Heart left ventricle (tissue), 16 donors: ENCODE measurements at regions of chr19 and their contacts with region 1.

Region 1: GRCh38 chr19:57171551-57172081 is 4.3 kb upstream of the DUXA start:
- DNase-seq: peak; percentile 32 to 73 (median 64)
- ATAC-seq: peak; percentile 54 to 88 (median 82)
- H3K4me3 ChIP-seq: peak overlapping the region in 10 of 12 donors; percentile 35 to 66 (median 53)
- H3K27ac ChIP-seq: peak overlapping the region in 10 of 12 donors; percentile 15 to 75 (median 52)
- H3K4me1 ChIP-seq: peaks cover 0 to 12% (median 6%) of the 10 kb centered on the region in 12 donors
- H3K27me3 ChIP-seq: no peaks in the 10 kb centered on the region
- CTCF ChIP-seq: no peak
- POLR2A ChIP-seq: no peak

Region 2: DNA sequence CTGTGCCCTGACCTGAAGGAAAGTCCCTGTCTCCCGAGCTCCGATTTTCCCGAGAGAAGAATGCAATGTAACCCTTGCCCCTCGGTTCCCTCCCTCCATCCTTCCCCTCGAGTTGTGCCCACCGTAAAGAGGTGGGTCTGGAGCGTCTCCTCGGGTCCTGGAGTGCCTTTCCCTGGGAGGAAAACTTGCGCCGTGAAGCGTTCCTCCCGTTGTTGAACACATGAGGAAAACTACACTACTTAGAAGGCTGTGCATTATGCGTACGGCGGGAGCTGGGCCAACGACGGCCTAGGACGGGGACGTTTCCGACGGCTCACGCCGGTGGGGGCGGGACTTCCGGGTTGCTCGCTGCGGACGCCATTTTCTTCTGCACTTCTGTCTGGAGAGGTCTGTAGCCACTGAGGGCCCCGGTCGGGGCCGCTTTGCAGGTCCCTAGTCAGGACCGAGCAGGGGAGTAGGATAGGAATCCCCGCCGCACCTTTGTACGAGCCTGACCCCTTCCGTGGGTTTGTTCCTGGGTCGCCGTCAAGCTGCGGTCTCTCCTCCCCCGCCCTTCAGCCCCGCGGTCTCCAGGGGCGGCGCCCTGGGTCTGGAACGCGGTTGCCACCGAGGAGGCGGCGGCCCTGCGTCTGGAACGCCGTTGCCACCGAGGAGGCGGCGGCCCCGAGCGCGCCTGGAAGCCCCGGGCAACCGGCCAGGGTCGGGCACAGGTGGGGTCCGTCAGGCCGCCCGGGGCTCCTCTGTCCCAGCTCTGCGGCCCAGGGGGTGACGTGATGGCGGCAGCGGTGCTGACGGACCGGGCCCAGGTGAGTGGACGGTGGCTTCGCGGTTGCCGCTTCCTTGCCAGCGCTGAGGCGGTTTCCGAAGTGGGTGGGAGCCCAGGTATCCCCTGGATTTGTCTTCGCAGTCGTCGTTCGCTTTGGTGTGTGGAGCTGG is 19.8 kb after region 1 on chr19 and contains the start of gene ZNF264:
- intact Hi-C with region 1: loop called in 1 of 10 experiments (anchors 2 kb)
- DNase-seq: peak; percentile 93 to 97 (median 95)
- ATAC-seq: peak; percentile 98 to 99 (median 98)
- H3K4me3 ChIP-seq: peak within 1 kb of the TSS; percentile 83 to 100 (median 98)
- H3K27ac ChIP-seq: peak within 1 kb of the TSS; percentile 64 to 96 (median 89)
- H3K4me1 ChIP-seq: peaks cover 0 to 29% (median 19%) of the 10 kb centered on the region in 12 donors
- H3K27me3 ChIP-seq: no peaks in the 10 kb centered on the region
- CTCF ChIP-seq: peak in 4 of 12 donors; percentile 6 to 16 (median 14)
- POLR2A ChIP-seq: peak in 1 of 2 donors; percentile 55
- total RNA-seq, gene ZNF264: 13.3 to 30.1 (median 20.3) TPM